WTC11 (cell line): ENCODE measurements at regions of chr17 and their contacts with region 1.

Region 1: DNA sequence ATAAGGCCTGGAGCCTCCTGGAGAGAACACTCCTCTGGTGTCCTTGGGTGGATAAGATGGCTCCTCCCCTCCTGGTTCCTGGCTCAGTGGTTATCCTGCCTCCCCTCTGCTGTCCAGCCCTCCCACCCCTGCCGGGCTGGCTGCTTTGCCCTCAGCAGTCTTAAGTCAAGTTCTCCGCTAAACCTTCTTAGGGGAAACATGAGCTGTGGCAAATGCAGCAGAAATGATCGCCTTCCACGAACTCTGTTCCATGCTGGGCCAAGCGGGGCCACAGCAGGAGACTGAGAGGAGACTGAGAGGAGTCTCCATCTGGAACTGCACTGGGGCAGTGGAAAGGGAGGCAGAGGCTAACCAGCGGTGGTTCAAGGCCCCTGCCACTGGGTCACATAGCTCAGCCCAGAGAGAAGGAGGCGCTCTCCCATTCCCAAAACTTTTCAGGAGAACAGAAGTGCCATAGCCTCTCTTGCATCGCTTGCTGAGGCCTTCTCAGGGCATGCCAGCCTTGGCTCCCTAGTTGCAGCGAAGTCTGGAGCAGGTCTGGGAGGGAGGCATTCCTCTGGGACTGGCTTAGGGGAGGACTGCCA is 26.9 kb downstream of the TNS4 start:
- DNase-seq: no peak
- ATAC-seq: no peak
- H3K4me3 Mint-ChIP-seq: no peak overlapping the region
- H3K27ac Mint-ChIP-seq: no peak overlapping the region
- H3K4me1 Mint-ChIP-seq: peaks cover 32% of the 10 kb centered on the region
- H3K27me3 Mint-ChIP-seq: peaks cover 6% of the 10 kb centered on the region
- CTCF ChIP-seq: no peak

Region 2: DNA sequence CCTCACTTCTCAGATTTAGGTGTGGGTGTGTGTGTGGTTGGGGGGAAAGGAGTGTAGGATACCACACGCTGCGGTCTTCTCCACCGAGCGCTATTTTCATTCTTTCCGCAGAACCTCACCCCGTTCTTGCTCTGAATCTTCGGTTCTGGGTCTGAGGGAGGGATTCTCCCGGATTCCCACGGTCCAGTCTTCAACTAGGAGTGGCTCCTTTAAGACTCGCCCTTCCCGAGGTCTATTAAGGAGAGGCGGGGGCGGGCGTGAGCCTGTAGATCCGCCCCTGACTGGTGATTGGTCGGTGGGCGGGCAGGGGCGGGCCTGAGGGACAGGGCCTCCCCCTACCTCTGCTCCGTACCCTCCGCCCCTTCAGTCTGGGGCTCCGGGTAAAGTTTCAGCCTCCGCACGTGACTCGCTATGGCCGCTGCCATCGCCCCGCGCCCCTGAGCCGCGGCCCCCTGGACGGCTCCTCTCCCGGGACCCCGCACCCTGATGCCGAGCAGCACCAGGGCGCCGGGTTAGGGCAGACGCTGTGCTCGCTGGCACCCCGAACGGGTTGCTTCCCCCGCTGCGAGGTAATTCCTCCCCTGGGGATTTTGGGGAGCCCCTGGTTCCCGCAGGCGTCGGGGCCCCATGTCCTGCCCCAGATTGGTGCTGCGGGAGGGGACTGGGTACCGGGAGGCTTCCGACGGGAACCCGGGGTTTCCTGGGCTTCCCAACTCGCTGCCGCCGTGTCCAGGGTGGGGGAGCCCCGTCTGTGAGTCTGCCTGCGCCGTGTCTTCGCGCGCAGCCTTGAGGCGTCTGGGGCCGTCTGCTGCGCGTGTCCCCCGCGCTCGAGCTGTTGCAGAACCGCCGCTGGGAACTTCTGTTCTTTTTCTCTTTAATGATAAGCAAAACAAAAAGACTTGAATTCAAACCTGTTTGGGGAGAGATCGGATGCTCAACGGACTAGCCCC is 156.4 kb before region 1 on chr17:
- CTCF ChIA-PET with region 1: interaction called, 11 read pairs
- POLR2A ChIA-PET with region 1: no interaction called
- DNase-seq: peak; percentile 96
- ATAC-seq: peak; percentile 93
- H3K4me3 Mint-ChIP-seq: peak overlapping the region; percentile 90
- H3K27ac Mint-ChIP-seq: peak overlapping the region; percentile 97
- H3K4me1 Mint-ChIP-seq: peaks cover 74% of the 10 kb centered on the region
- H3K27me3 Mint-ChIP-seq: peaks cover 22% of the 10 kb centered on the region
- CTCF ChIP-seq: no peak

Region 3: DNA sequence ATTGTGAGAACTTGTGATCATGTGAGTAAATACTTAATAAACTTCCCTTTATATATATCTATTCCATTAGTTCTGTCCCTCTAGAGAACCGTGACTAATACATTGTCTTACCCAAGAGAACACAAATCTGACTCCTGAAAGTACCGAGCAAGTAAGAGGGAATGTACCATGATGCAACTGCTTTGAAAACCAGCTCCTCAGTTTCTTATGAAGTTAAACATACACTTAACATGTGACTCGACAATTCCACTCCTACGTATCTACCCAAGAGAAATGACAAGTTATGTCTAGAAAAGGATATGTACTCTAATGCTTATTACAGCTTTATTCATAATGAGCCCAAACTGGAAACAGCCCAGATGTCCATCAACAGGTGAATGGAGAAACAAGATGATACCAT is 101.2 kb before region 1 on chr17:
- CTCF ChIA-PET with region 1: no interaction called
- POLR2A ChIA-PET with region 1: no interaction called
- DNase-seq: no peak
- ATAC-seq: no peak
- H3K4me3 Mint-ChIP-seq: no peak overlapping the region
- H3K27ac Mint-ChIP-seq: no peak overlapping the region
- H3K4me1 Mint-ChIP-seq: peaks cover 8% of the 10 kb centered on the region
- H3K27me3 Mint-ChIP-seq: no peaks in the 10 kb centered on the region
- CTCF ChIP-seq: no peak

Region 4: DNA sequence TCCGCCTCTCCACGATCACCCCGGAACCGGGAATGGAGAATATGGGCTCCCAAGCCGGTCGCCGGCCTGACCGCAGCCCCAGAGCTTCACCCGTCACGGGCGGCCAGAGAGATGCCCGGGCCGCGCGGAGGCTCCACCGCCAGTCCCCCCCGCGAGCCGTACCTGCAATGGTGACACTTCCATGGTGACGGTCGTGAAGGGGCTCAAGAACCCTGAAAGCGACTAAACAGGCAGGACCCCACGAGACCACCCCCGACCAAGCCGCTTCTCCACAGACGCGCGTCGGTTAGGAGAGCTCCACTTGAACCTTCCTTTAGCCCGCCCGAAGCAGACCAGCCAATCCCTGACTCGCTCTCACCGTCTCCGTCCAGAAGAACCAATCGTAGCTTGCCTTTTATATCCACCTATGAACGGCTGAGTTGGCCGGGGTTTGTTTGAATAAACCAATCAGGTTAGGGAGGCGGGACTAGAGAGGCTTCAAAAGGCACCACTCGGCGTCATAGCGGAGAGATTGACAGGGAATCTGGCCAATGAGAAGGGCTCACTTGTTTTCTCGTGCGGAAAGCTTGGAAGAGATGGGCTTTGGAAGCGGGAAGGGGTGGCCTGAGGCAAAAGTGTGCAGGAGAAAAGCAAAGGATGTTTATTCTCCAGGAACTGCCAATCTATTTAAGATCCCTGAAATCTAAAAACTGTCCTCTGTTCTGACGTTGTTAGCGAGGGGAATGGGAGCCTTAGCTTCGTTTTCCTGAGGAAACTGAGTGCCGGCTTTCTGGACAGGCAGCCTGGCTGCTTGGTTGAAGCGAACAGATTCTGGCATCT is 56.7 kb before region 1 on chr17 and contains the start of gene TOP2A:
- CTCF ChIA-PET with region 1: interaction called, 125 read pairs
- POLR2A ChIA-PET with region 1: interaction called, 3 read pairs
- DNase-seq: peak; percentile 97
- ATAC-seq: peak; percentile 95
- H3K4me3 Mint-ChIP-seq: peak within 1 kb of the TSS; percentile 97
- H3K27ac Mint-ChIP-seq: peak within 1 kb of the TSS; percentile 84
- H3K4me1 Mint-ChIP-seq: peaks cover 49% of the 10 kb centered on the region
- H3K27me3 Mint-ChIP-seq: no peaks in the 10 kb centered on the region; the same call in 1 of the 2 replicates
- CTCF ChIP-seq: no peak
- total RNA-seq, gene TOP2A: 273 to 307 TPM (median 292 TPM) in 3 replicates

Region 5: DNA sequence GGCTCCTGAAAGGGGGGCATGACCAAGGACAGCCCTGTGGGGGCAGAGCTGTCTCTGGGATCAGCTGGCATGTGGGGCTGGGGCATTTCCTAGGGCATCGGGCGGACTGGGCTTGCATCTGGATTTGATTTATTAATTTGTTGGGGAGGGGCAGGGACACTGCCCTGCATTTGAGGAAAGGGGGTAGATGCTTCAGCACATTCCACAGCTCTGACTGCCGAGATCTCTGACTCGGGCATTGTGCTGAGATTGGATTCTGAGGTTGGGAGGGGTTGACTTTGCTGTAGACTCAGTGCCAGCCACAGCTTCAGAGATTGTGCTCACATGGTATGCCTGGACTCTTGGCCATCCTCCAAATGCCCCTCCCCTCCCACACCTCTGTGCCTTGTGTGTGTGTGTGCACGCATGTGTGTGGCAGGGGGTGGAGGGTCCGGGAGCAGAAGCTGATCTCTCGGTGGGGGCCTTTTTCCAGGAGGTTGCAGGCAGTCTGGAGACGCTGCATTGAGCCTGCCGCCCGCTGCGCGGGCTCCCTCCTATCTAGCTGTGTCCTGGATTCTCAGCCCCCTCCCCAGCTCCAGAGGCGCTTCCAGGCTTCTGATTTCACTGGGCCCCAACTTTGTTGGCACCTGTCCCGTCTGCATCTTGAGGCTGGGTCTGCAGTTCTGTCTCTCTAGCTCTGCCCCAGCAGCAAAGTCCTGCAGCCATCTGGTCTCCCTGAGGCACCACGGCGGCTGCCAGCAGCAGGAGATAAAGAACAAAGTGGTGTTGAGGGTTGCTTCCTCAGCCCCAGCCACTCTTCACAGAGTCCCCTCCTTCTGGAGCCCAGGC is 16.3 kb before region 1 on chr17:
- CTCF ChIA-PET with region 1: interaction called, 293 read pairs
- POLR2A ChIA-PET with region 1: interaction called, 3 read pairs
- DNase-seq: no peak
- ATAC-seq: peak; percentile 15; the same call in 1 of the 2 replicates
- H3K4me3 Mint-ChIP-seq: no peak overlapping the region
- H3K27ac Mint-ChIP-seq: 0 out of 2 replicates have a peak overlapping the region, but pooled peaks have one; percentile 76
- H3K4me1 Mint-ChIP-seq: peaks cover 60% of the 10 kb centered on the region
- H3K27me3 Mint-ChIP-seq: no peaks in the 10 kb centered on the region
- CTCF ChIP-seq: no peak

Region 6: DNA sequence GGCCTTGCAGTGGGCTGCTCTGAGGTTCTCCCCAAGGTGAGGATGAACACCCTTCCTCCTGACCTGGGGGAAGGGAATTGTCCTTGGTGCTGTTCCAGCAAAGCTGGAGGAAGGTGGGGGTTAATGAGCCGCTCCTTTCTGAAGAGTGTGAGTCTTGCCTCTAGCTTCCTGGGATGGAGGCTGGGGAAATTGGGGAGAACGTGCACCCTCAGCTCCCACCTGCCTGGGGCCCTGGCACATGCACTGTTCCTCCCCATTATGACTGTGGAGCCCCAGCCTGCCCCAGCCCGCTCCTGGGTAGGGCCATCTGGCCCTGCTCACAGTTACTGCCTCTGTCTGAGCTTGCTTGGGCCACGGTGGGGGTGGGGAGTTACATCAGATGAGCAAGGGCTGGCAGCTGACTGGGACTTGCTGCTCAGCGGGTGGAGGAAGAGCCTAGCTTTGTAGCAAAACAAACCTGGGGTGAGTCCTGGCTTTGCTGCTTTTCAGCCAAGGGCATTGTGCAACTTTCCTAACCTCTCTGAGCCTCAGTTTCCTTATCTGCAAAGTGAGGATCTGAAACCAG is 15.9 kb after region 1 on chr17:
- CTCF ChIA-PET with region 1: interaction called, 74 read pairs
- POLR2A ChIA-PET with region 1: interaction called, 3 read pairs
- DNase-seq: peak; percentile 46
- ATAC-seq: peak; percentile 77
- H3K4me3 Mint-ChIP-seq: peak overlapping the region; percentile 30; the same call in 1 of the 2 replicates
- H3K27ac Mint-ChIP-seq: peak overlapping the region; percentile 87
- H3K4me1 Mint-ChIP-seq: peaks cover 66% of the 10 kb centered on the region
- H3K27me3 Mint-ChIP-seq: peaks cover 2% of the 10 kb centered on the region; the same call in 1 of the 2 replicates
- CTCF ChIP-seq: no peak

Region 7: GRCh38 chr17:40518401-40519121 is 44.0 kb after region 1 on chr17:
- CTCF ChIA-PET with region 1: interaction called, 20 read pairs
- POLR2A ChIA-PET with region 1: interaction called, 3 read pairs
- DNase-seq: no peak
- ATAC-seq: peak; percentile 74
- H3K4me3 Mint-ChIP-seq: no peak overlapping the region
- H3K27ac Mint-ChIP-seq: no peak overlapping the region
- H3K4me1 Mint-ChIP-seq: peaks cover 24% of the 10 kb centered on the region
- H3K27me3 Mint-ChIP-seq: no peaks in the 10 kb centered on the region
- CTCF ChIP-seq: no peak

Region 8: DNA sequence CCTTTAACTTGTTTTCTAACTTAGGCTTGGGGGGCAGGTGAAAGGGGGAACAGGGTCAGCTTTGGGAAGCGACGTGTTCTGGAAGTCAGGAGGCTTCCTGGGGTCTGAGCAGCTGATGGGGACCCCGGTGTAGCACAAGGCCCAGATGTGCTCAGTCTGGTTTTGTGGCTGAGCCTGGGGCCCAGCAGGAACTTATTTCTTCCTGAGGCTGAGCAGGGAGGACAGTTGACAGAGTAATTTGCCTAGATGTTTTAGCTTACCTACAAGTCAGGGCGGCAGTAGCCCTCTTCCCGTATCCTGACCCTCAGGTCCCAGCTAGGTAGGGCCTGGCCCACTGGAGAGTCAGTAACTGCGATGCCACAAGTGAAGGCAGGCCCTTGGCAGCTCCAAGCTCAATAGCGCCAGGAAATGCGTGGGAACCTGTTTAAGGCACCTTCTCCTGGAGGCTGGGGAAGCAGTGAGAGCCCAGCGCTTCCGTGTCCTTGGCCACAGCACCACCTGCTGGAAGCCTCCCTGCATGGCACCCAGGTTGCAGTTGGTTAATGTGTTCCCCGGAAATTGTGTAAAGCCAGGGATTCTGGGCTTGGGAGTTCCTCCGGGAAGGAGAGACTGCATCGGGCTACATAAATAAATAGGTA is 85.6 kb after region 1 on chr17:
- CTCF ChIA-PET with region 1: interaction called, 14 read pairs
- POLR2A ChIA-PET with region 1: no interaction called
- DNase-seq: peak; percentile 93
- ATAC-seq: peak; percentile 83
- H3K4me3 Mint-ChIP-seq: no peak overlapping the region
- H3K27ac Mint-ChIP-seq: no peak overlapping the region
- H3K4me1 Mint-ChIP-seq: peaks cover 42% of the 10 kb centered on the region
- H3K27me3 Mint-ChIP-seq: peaks cover 5% of the 10 kb centered on the region
- CTCF ChIP-seq: peak; percentile 96

Region 9: DNA sequence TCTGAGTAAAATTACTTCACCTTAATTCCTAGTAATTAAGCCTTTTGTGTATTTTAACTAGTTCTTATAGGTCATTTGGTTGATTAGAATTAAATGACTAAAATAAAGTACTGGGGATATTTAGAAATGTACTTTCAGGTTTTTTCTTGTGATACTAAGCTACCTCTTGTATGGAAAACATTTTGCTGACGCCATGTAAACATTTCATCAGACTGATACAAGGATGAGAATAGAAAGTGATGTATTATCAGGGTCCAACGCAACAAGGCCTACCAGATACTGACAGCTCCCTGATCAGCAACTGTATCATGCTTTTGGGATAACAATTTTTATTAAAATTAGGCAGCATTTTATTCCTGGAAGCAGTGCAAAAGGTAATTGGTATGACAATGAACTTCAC is 171.4 kb after region 1 on chr17:
- CTCF ChIA-PET with region 1: no interaction called
- POLR2A ChIA-PET with region 1: no interaction called
- DNase-seq: no peak
- ATAC-seq: no peak
- H3K4me3 Mint-ChIP-seq: peak overlapping the region; percentile 33
- H3K27ac Mint-ChIP-seq: no peak overlapping the region
- H3K4me1 Mint-ChIP-seq: peaks cover 14% of the 10 kb centered on the region
- H3K27me3 Mint-ChIP-seq: peaks cover 6% of the 10 kb centered on the region; the same call in 1 of the 2 replicates
- CTCF ChIP-seq: no peak

Region 10: DNA sequence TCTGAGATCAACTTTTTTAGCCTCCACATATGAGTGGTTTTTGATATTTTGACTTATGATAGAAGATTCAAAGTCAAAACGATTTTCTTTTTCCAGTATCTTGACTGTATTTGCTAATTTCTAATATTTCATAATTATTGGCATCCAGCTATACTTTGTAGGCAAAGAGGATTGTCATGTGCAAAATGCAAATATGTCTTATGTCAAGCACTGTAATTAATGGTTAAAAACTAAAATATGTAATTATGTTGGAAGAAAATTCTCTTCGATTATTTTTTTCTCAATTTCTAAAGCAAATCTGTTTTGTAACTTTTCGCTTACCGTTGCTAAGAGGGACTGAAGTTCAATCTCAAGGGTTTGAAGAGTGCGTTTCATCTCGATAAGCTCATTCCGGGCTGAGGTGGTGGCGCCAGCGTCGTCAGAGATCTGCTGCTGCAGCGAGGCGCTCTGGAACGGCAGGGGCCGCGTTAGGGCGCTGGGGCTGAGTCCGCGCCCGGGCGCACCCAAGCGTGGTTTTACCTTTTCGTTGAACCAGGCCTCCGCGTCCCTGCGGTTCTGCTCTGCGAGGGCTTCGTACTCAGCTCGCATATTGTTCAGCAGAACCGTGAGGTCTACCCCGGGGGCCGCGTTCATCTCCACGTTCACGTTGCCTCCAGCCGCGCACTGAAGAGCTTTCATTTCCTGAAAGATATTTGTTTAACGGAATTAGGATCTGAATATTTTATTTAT is 304.8 kb after region 1 on chr17:
- CTCF ChIA-PET with region 1: no interaction called
- POLR2A ChIA-PET with region 1: no interaction called
- DNase-seq: peak; percentile 35
- ATAC-seq: peak; percentile 57; the same call in 1 of the 2 replicates
- H3K4me3 Mint-ChIP-seq: peak overlapping the region; percentile 30
- H3K27ac Mint-ChIP-seq: no peak overlapping the region
- H3K4me1 Mint-ChIP-seq: no peaks in the 10 kb centered on the region
- H3K27me3 Mint-ChIP-seq: peaks cover 28% of the 10 kb centered on the region
- CTCF ChIP-seq: no peak